Activated CD4-positive, alpha-beta T cell treated with anti-CD3 and anti-CD28 coated beads, Interleukin-2, amount 10 ng/mL, durations not matched to agents 7 days and 5 days (primary cell): ENCODE measurements at regions of chr5 and their contacts with region 1.

Region 1: DNA sequence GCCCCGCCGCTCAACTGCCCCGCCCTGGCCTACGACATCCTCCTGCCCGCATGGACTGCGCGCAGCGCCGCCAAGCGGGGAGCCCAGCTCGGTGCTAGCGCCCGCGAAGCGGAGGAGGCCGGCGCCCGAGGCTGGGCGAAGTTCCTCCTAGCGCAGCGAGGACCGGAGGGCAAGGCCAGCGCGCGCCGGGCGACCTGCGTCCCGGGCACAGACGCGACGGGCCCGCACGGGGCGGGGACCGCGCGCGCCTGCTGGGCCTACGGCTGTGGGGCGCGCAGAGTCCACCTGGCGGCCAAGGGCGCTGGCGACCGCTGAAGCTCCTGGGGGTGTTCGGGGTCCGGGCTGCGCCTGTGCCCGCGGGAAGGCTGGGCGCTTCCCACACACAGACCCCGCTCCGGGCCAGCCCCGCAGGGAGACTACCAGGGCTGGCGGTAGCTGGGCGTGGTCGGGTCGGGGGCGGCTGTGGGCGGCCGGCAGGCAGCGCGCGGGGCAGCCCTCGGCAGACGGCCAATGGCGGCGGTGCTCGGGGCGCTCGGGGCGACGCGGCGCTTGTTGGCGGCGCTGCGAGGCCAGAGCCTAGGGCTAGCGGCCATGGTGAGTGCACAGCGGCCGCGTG is at the start of gene PCBD2:
- DNase-seq: peak; percentile 93
- H3K4me3 Mint-ChIP-seq: peak within 1 kb of the TSS; percentile 92
- H3K27ac Mint-ChIP-seq: peak within 1 kb of the TSS; percentile 99
- H3K4me1 Mint-ChIP-seq: peaks cover 23% of the 10 kb centered on the region
- H3K27me3 Mint-ChIP-seq: no peaks in the 10 kb centered on the region
- total RNA-seq, gene PCBD2: 15.4 to 15.7 TPM

Region 2: GRCh38 chr5:134626369-134627014 is 278.2 kb before region 1 on chr5:
- CTCF ChIA-PET with region 1: no interaction called
- POLR2A ChIA-PET with region 1: no interaction called
- DNase-seq: no peak
- H3K4me3 Mint-ChIP-seq: no peak overlapping the region
- H3K27ac Mint-ChIP-seq: no peak overlapping the region
- H3K4me1 Mint-ChIP-seq: peaks cover 27% of the 10 kb centered on the region
- H3K27me3 Mint-ChIP-seq: no peaks in the 10 kb centered on the region

Region 3: GRCh38 chr5:134738133-134738962 is 166.4 kb before region 1 on chr5 and contains the start of gene CAMLG:
- CTCF ChIA-PET with region 1: interaction called, 13 read pairs
- POLR2A ChIA-PET with region 1: no interaction called
- DNase-seq: peak; percentile 98
- H3K4me3 Mint-ChIP-seq: peak within 1 kb of the TSS; percentile 88
- H3K27ac Mint-ChIP-seq: peak within 1 kb of the TSS; percentile 95
- H3K4me1 Mint-ChIP-seq: peaks cover 35% of the 10 kb centered on the region
- H3K27me3 Mint-ChIP-seq: no peaks in the 10 kb centered on the region
- total RNA-seq, gene CAMLG: 20.6 to 24.1 TPM

Region 4: DNA sequence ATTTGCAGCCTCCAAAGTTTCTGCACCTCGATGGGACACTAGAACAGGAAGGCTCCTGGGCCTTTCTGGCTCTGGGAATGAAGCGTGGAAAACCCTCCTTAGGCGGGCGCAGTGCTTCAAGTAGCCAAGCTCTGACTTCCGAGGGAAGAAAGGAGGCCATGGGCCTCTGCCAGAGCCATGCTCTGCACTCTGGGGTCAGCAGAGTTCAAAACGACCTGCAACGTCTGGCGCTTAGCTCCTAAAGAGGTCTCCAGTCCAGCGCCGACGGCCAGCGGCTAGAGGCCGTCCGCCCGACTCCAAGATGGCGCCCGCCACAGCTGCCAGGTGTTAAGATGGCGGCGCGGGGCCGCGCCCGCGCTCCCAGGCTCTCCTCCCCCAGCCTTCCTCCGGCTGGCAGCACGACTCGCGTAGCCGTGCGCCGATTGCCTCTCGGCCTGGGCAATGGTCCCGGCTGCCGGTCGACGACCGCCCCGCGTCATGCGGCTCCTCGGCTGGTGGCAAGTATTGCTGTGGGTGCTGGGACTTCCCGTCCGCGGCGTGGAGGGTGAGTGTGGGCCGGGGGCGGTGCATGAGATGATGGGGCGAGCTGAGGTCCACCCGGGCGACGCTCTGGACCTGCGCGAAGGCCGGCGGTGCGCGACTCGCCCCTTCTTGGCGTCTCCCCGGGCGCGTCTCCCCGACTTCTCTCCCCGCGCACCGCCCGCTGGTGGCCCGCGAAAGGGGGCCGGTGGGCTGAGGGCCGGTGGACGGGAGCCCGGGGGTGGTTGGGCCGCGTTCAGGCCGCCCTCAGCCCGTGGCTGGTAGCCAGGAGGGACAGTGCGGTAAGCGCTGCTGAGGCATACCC is 30.5 kb before region 1 on chr5 and contains the start of gene TXNDC15:
- CTCF ChIA-PET with region 1: interaction called, 19 read pairs
- POLR2A ChIA-PET with region 1: no interaction called
- DNase-seq: peak; percentile 83
- H3K4me3 Mint-ChIP-seq: peak within 1 kb of the TSS; percentile 92
- H3K27ac Mint-ChIP-seq: peak within 1 kb of the TSS; percentile 99
- H3K4me1 Mint-ChIP-seq: peaks cover 48% of the 10 kb centered on the region
- H3K27me3 Mint-ChIP-seq: no peaks in the 10 kb centered on the region
- total RNA-seq, gene TXNDC15: 40.6 to 50.0 TPM

Region 5: DNA sequence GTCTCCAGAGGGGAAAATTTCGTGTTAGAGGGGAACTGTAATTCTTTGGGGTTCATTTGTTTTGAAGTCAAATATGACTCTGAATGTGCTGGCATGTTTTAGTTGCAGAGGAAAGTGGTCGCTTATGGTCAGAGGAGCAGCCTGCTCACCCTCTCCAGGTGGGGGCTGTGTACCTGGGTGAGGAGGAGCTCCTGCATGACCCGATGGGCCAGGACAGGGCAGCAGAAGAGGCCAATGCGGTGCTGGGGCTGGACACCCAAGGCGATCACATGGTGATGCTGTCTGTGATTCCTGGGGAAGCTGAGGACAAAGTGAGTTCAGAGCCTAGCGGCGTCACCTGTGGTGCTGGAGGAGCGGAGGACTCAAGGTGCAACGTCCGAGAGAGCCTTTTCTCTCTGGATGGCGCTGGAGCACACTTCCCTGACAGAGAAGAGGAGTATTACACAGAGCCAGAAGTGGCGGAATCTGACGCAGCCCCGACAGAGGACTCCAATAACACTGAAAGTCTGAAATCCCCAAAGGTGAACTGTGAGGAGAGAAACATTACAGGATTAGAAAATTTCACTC is 17.1 kb before region 1 on chr5:
- CTCF ChIA-PET with region 1: interaction called, 25 read pairs
- POLR2A ChIA-PET with region 1: no interaction called
- DNase-seq: no peak
- H3K4me3 Mint-ChIP-seq: no peak overlapping the region
- H3K27ac Mint-ChIP-seq: no peak overlapping the region
- H3K4me1 Mint-ChIP-seq: peaks cover 3% of the 10 kb centered on the region
- H3K27me3 Mint-ChIP-seq: no peaks in the 10 kb centered on the region

Region 6: DNA sequence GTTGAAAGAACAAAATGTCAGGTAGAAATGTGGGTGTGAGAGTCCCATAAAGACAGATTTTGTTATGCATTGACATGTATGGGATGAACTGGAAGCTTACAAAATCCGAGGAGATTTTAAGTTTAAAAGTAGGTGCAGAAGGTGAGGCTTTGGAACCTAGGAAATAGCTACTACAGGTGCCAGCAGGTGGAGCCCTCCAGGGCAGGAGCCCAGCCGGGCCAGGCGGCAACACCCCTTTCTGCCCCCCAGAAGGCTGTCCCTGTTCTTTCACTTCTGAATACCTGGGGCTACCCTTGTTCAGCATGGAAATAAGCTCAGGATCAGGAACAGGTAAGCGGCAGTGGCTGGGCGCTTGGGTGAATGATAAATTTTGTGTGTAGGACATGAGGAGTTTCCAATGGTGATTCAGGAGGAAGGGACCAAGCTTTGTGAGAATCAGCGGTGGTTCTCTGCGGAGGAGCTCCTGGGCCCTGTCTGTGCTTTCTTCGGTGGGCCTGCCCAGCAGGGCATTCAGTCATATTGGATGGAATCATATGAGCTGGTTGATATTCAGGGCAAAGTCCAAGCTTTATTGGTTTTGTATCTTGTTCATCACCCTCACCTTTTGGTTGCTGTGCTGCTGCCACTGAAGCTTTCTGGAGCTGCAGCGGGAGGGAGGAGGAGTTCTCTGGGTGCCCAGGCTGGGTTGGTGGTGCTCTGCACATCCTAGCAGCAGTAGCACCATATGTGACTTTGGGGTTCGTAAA is 12.5 kb after region 1 on chr5:
- CTCF ChIA-PET with region 1: interaction called, 36 read pairs
- POLR2A ChIA-PET with region 1: no interaction called
- DNase-seq: no peak
- H3K4me3 Mint-ChIP-seq: no peak overlapping the region
- H3K27ac Mint-ChIP-seq: no peak overlapping the region
- H3K4me1 Mint-ChIP-seq: peaks cover 26% of the 10 kb centered on the region
- H3K27me3 Mint-ChIP-seq: no peaks in the 10 kb centered on the region

Region 7: DNA sequence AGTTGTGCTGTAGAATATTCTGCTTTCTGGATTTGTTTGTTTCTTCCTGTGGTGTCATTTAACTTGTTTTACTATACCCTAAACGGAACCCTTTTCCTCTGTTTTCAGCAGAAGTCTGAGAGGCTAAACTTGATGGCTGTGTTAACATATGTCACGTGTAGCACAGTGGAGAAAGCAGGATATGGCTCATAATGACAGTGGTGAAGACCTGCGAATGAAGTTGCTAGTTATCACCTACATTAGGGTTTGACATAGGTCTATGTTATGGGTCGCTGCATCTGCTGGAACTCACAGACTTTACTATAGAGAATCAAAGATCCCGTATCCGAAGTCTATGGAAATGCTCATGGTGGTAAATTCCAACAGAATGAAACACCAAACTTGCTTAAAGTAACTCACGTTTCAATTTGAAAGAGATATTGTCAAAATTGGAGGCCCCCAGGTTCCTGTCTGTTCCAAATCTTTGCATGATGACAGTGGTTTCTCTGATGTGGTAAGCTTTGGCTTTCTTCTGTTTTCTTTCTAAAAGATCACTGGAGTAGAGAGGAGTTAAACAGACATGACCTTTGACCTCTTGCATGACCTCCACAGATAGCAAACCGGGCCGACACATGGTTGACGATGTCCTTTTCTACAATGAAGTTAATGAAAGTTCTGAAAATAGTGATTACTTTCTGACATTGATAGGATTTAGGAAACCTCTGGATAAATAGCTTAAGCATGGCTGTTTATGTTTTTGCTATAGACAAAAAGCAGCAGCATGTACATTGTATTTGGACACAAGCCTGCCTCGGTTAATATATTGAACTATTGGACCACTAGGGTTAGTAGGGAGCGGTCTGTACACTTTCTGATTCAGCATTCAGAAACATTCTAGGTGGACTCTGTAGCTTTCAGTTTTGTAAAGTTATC is 59.9 kb after region 1 on chr5:
- CTCF ChIA-PET with region 1: no interaction called
- POLR2A ChIA-PET with region 1: no interaction called
- DNase-seq: peak; percentile 57
- H3K4me3 Mint-ChIP-seq: peak overlapping the region; percentile 37
- H3K27ac Mint-ChIP-seq: peak overlapping the region; percentile 92
- H3K4me1 Mint-ChIP-seq: peaks cover 37% of the 10 kb centered on the region
- H3K27me3 Mint-ChIP-seq: no peaks in the 10 kb centered on the region

Region 8: DNA sequence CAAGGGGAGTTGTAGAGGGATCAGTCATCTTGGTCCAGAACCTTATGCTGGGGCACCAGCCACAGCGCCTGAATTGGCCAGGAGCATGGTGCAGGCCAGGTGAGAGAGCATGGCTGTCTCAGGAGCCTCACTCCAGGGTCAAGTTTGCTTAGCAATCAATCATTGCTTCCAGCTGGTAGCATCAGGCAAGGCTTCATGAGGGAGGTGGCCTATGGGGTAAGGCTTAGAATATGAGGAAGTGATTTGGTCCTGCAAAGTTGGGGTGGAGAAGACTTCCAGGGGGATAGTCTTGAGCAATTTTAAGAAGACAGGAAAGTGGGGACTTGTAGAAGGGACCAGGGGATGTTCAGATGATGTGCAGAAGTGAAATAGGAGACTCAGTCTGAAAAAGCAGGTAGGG is 183.2 kb after region 1 on chr5:
- CTCF ChIA-PET with region 1: no interaction called
- POLR2A ChIA-PET with region 1: no interaction called
- DNase-seq: no peak
- H3K4me3 Mint-ChIP-seq: no peak overlapping the region
- H3K27ac Mint-ChIP-seq: no peak overlapping the region
- H3K4me1 Mint-ChIP-seq: no peaks in the 10 kb centered on the region
- H3K27me3 Mint-ChIP-seq: peaks cover 14% of the 10 kb centered on the region